Activated T-helper 1 cell treated with anti-CD3 and anti-CD28 coated beads, Interleukin-12 subunit alpha, Interleukin-12 subunit beta, Interleukin-2, Interleukin-4 antibody, amounts not matched to agents 30 ng/mL and 10 ng/mL and 1 ng/mL, durations not matched to agents 14 hours and 24 hours and 36 hours (primary cell): ENCODE measurements at regions of chr14 and their contacts with region 1.

Region 1: GRCh38 chr14:71267007-71267513 is 359.8 kb downstream of the PCNX1 start:
- DNase-seq: no peak
- H3K4me3 Mint-ChIP-seq: peak overlapping the region; percentile 60
- H3K27ac Mint-ChIP-seq: peak overlapping the region; percentile 80
- H3K4me1 Mint-ChIP-seq: peaks cover 52% of the 10 kb centered on the region
- H3K27me3 Mint-ChIP-seq: no peaks in the 10 kb centered on the region

Region 2: DNA sequence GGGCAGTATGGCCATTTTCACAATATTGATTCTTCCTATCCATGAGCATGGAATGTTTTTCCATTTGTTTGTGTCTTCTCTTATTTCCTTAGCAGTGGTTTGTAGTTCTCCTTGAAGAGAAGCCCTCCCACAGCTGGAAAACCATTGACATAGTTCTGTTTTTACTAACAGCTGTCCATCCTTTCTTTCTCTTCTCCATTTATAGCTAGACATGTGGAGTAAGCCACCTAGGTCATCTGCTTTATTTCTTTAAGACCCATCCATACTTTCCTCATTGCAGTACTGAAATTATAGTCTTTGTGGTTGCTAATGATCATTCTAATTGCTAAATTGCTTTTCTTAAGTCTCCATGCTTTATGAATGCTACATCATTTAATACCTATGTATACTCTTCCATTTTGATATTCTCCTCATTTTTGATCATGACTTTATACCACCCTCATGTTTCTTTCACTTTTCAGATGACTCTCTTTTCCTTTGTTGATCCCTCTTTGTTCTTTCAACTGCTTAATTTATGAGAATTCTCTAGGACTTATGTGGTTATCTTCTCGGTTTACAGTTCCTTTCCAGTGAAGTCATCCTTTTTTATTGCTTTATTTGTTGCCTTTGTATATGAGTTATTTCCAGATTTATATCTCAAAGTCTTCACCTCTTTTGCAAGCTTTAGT is 245.6 kb before region 1 on chr14:
- intact Hi-C with region 1: loop called (anchors 5 kb)
- DNase-seq: no peak
- H3K4me3 Mint-ChIP-seq: no peak overlapping the region
- H3K27ac Mint-ChIP-seq: peak overlapping the region; percentile 80
- H3K4me1 Mint-ChIP-seq: peaks cover 33% of the 10 kb centered on the region
- H3K27me3 Mint-ChIP-seq: no peaks in the 10 kb centered on the region

Region 3: DNA sequence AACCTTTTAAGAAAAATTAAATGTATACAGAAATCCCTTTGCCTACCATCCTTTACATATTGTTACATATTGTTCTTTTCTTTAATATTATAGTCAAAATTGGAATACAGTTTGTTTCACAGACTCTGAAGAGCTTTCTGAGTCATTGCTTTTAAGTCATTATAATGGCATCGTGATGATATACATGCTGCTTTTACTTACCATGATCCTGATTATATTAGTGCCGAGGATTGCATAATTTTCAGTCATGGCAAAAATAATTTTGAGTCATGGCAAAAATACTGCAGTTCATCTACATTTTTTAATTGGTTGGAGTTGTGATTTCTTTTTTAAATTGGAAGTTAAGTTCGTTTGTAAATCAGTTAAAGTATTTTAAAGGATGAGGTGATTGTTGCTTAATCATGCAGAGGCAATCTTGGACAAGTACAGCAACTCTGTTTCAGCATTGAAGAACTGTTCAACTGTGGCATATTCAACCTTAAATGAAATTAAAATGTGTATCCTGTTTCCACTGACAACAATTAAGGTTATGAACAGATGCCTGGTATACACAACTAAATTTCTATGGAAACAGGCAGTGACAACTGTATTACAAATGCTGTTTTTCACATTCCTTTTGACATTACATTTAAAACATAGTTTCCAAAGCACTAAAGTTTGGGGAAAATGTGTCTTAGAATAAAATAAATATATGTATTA is 217.5 kb before region 1 on chr14:
- intact Hi-C with region 1: no loop called
- DNase-seq: no peak
- H3K4me3 Mint-ChIP-seq: no peak overlapping the region
- H3K27ac Mint-ChIP-seq: no peak overlapping the region
- H3K4me1 Mint-ChIP-seq: no peaks in the 10 kb centered on the region
- H3K27me3 Mint-ChIP-seq: no peaks in the 10 kb centered on the region

Region 4: GRCh38 chr14:71221119-71221518 is 45.9 kb before region 1 on chr14:
- intact Hi-C with region 1: loop called (anchors 1 kb)
- DNase-seq: no peak
- H3K4me3 Mint-ChIP-seq: no peak overlapping the region
- H3K27ac Mint-ChIP-seq: no peak overlapping the region
- H3K4me1 Mint-ChIP-seq: peaks cover 34% of the 10 kb centered on the region
- H3K27me3 Mint-ChIP-seq: peaks cover 3% of the 10 kb centered on the region

Region 5: GRCh38 chr14:71235875-71236274 is 31.2 kb before region 1 on chr14:
- intact Hi-C with region 1: no loop called
- DNase-seq: no peak
- H3K4me3 Mint-ChIP-seq: no peak overlapping the region
- H3K27ac Mint-ChIP-seq: no peak overlapping the region
- H3K4me1 Mint-ChIP-seq: no peaks in the 10 kb centered on the region
- H3K27me3 Mint-ChIP-seq: peaks cover 15% of the 10 kb centered on the region

Region 6: GRCh38 chr14:71290960-71291466 is 24.0 kb after region 1 on chr14:
- intact Hi-C with region 1: loop called (anchors 1 kb)
- DNase-seq: no peak
- H3K4me3 Mint-ChIP-seq: peak overlapping the region; percentile 6
- H3K27ac Mint-ChIP-seq: peak overlapping the region; percentile 81
- H3K4me1 Mint-ChIP-seq: peaks cover 31% of the 10 kb centered on the region
- H3K27me3 Mint-ChIP-seq: peaks cover 7% of the 10 kb centered on the region

Region 7: GRCh38 chr14:71410578-71411284 is 143.7 kb after region 1 on chr14:
- intact Hi-C with region 1: loop called (anchors 2 kb)
- DNase-seq: no peak
- H3K4me3 Mint-ChIP-seq: no peak overlapping the region
- H3K27ac Mint-ChIP-seq: peak overlapping the region; percentile 84
- H3K4me1 Mint-ChIP-seq: peaks cover 62% of the 10 kb centered on the region
- H3K27me3 Mint-ChIP-seq: no peaks in the 10 kb centered on the region